ENCODE measurements at regions of chr22 and their contacts with region 1.

Region 1: GRCh38 chr22:39532215-39533071 is at the start of gene RPS19BP1:
- DNase-seq: peak; percentile 96 to 100
- ATAC-seq: peak; percentile 86 to 94 (median 87)
- H3K4me3 ChIP-seq: peak within 1 kb of the TSS; percentile 90
- H3K4me3 Mint-ChIP-seq: peak within 1 kb of the TSS; percentile 94
- H3K27ac ChIP-seq: peak within 1 kb of the TSS; percentile 87
- H3K27ac Mint-ChIP-seq: peak within 1 kb of the TSS; percentile 92 to 97
- H3K4me1 ChIP-seq: peaks cover 54% of the 10 kb centered on the region
- H3K4me1 Mint-ChIP-seq: peaks cover 30 to 54% of the 10 kb centered on the region in 2 donors
- H3K27me3 ChIP-seq: no peaks in the 10 kb centered on the region
- H3K27me3 Mint-ChIP-seq: no peaks in the 10 kb centered on the region
- CTCF ChIP-seq: no peak
- total RNA-seq, gene RPS19BP1: 56.7 to 66.5 (median 61.3) TPM

Region 2: DNA sequence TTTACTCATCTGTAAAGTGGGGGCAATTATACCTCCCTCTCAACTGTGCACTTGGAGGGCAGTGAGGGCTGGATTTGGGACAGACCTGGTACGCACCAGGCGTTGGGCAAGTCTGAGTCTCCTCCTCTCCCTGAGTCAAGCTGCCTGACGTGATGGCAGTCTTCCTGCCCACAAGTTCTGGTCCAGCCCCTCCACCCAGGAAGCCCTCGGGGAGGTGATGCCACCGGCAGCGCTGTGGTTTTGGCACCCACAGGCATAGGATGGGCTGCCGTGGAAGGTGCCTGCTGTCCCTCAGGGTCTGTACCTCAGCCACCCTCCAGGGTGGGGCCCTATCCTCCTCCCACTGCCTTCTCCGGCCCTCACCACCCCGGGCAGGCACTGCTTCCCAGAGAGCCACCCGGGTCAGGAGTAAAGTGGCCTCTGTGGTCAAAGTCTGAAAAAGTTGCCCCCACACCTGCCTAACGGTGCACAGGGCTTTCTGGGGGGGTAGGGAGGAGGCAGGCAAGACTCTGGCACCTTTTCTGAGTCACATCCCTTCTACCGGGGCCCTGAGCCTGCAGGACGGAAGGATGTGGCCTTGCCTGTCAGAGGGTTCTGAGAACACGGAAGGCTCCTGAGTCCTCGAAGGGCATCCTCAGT is 441.9 kb before region 1 on chr22:
- intact Hi-C with region 1: loop called (anchors 1 kb)
- DNase-seq: peak; percentile 90 to 94
- ATAC-seq: peak; percentile 67 to 87 (median 77)
- H3K4me3 ChIP-seq: peak overlapping the region; percentile 22
- H3K4me3 Mint-ChIP-seq: peak overlapping the region; percentile 90
- H3K27ac ChIP-seq: peak overlapping the region; percentile 98
- H3K27ac Mint-ChIP-seq: peak overlapping the region; percentile 98 to 99
- H3K4me1 ChIP-seq: peaks cover 97% of the 10 kb centered on the region
- H3K4me1 Mint-ChIP-seq: peaks cover 82 to 90% of the 10 kb centered on the region in 2 donors
- H3K27me3 ChIP-seq: no peaks in the 10 kb centered on the region
- H3K27me3 Mint-ChIP-seq: no peaks in the 10 kb centered on the region
- CTCF ChIP-seq: no peak

Region 3: DNA sequence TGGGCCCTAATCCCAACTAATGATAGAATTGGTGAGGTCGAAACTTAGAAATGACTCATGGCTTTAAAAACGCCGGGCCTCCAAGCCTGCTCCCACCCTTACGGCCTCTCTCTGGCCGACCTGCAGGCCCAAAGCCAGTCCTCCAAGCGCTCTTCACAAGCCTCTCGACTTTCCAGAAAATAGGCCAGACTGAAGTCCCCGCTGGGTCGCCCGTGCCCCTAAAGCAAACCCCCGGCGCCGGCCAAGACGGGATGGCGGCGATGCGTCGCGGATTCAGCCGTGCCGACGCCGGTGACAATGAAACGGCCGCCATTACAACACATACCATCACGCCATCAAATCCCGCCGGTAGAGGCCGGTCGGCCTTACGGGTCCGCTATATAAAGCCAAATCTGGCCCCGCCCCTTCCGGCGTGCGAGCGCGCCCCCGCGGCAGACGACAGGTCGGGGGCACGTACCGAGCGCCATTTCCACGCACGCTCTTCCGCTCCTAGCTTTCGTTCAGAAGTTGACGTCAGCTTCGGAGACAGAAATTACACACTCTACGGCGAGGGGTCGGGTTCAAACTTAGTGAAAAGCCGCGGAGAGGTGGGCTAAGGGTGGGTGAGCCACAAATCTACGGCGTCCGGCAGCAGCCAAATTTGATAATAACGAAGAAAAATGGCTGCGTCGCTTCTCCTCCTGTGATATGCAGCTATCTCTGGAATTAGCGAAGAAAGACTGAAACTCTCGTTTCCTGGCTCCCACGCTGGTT is 213.0 kb before region 1 on chr22 and contains the start of gene RPL3:
- intact Hi-C with region 1: loop called (anchors 2 kb)
- DNase-seq: peak; percentile 98 to 99
- ATAC-seq: peak; percentile 77 to 92 (median 81)
- H3K4me3 ChIP-seq: peak within 1 kb of the TSS; percentile 72
- H3K4me3 Mint-ChIP-seq: peak within 1 kb of the TSS; percentile 99
- H3K27ac ChIP-seq: peak within 1 kb of the TSS; percentile 97
- H3K27ac Mint-ChIP-seq: peak within 1 kb of the TSS; percentile 99 to 100
- H3K4me1 ChIP-seq: peaks cover 54% of the 10 kb centered on the region
- H3K4me1 Mint-ChIP-seq: peaks cover 34 to 63% of the 10 kb centered on the region in 2 donors
- H3K27me3 ChIP-seq: no peaks in the 10 kb centered on the region
- H3K27me3 Mint-ChIP-seq: no peaks in the 10 kb centered on the region
- CTCF ChIP-seq: no peak
- total RNA-seq, gene RPL3: 1,534 to 1,757 (median 1,614) TPM

Region 4: DNA sequence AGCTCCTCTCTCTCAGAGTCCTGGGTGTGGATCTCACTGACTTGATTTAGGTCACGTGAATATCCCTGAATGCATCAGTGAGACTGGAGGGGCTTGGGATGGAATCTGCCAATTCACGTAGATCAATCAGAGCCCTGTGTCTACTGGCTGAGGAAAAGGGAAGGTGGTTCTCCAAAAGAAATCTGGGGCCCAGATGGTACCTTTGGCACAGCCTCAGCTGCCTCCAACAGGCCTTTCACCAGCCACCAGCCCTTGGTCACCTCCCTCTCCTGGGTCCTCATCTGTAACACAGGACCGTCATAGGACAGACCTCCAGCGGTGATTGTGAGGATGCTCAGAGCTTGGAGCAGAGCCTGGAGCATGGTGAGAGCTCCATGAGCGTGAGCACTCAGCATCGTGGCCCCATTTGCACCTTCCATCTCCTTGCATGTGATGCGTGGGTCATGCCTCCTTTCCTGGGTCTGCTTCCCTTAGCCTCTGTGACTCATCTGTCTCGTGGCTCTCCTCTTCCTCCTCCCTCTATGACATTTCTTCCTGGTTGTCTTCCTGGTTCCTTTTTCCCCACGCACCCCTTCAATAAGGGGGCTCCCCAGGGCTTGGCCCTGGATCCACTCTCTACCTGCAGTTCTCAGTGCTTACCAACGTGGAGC is 37.8 kb before region 1 on chr22:
- intact Hi-C with region 1: loop called (anchors 1 kb)
- DNase-seq: no peak
- ATAC-seq: no peak
- H3K4me3 ChIP-seq: no peak overlapping the region
- H3K4me3 Mint-ChIP-seq: no peak overlapping the region
- H3K27ac ChIP-seq: no peak overlapping the region
- H3K27ac Mint-ChIP-seq: no peak overlapping the region
- H3K4me1 ChIP-seq: peaks cover 5% of the 10 kb centered on the region
- H3K4me1 Mint-ChIP-seq: peaks cover 6 to 7% of the 10 kb centered on the region in 2 donors
- H3K27me3 ChIP-seq: no peaks in the 10 kb centered on the region
- H3K27me3 Mint-ChIP-seq: no peaks in the 10 kb centered on the region
- CTCF ChIP-seq: no peak

Region 5: GRCh38 chr22:39520054-39520891 is 12.2 kb before region 1 on chr22 and contains the start of gene ATF4:
- intact Hi-C with region 1: loop called (anchors 1 kb)
- DNase-seq: peak; percentile 92 to 99
- ATAC-seq: peak; percentile 88 to 95 (median 88)
- H3K4me3 ChIP-seq: peak within 1 kb of the TSS; percentile 97
- H3K4me3 Mint-ChIP-seq: peak within 1 kb of the TSS; percentile 98
- H3K27ac ChIP-seq: peak within 1 kb of the TSS; percentile 91
- H3K27ac Mint-ChIP-seq: peak within 1 kb of the TSS; percentile 96 to 98
- H3K4me1 ChIP-seq: peaks cover 45% of the 10 kb centered on the region
- H3K4me1 Mint-ChIP-seq: peaks cover 42% of the 10 kb centered on the region in 2 donors
- H3K27me3 ChIP-seq: no peaks in the 10 kb centered on the region
- H3K27me3 Mint-ChIP-seq: no peaks in the 10 kb centered on the region
- CTCF ChIP-seq: no peak
- total RNA-seq, gene ATF4: 235 to 242 (median 238) TPM

Region 6: DNA sequence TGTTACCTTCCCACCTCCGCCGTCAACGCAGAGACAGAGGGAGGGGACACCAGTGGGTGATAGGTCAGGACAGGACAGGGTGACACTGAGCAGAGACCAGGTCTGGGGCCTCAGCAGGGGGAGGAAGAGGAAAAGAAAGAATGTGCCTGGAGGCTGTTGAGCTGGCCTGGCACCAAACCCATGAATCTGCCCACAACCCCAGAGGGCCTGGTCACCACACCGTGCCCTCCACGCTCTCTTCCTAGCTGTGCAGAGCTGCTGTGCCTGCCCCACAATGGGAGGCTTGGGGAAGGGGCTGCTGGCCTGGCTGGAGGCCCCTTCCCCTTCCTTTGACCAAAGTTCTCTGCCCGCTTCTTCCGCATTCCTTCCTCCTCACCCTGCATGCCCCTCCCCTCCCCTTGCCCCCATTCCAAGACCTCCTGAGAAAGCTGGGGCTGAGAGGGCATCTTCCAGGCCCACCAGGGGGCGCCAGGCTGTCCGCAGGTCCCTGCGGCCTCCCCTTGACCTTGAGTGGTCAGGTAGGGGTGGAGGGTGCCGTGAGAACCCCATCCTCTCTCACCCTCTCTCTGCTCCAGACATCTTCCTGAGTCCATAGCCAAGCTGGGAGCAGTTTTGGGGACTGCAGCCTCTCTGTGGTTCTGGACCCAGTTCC is 27.1 kb after region 1 on chr22:
- intact Hi-C with region 1: no loop called
- DNase-seq: peak in 1 of 2 donors; percentile 14
- ATAC-seq: no peak
- H3K4me3 ChIP-seq: no peak overlapping the region
- H3K4me3 Mint-ChIP-seq: no peak overlapping the region
- H3K27ac ChIP-seq: no peak overlapping the region
- H3K27ac Mint-ChIP-seq: no peak overlapping the region
- H3K4me1 ChIP-seq: peaks cover 6% of the 10 kb centered on the region
- H3K4me1 Mint-ChIP-seq: peaks cover 5 to 7% of the 10 kb centered on the region in 2 donors
- H3K27me3 ChIP-seq: peaks cover 23% of the 10 kb centered on the region
- H3K27me3 Mint-ChIP-seq: peaks cover 19 to 43% of the 10 kb centered on the region in 2 donors
- CTCF ChIP-seq: peak; percentile 16

Region 7: GRCh38 chr22:40044102-40044869 is 511.8 kb after region 1 on chr22:
- intact Hi-C with region 1: loop called (anchors 5 kb)
- DNase-seq: peak; percentile 98 to 99
- ATAC-seq: peak; percentile 82 to 92 (median 85)
- H3K4me3 ChIP-seq: peak overlapping the region; percentile 59
- H3K4me3 Mint-ChIP-seq: peak overlapping the region; percentile 97
- H3K27ac ChIP-seq: peak overlapping the region; percentile 87
- H3K27ac Mint-ChIP-seq: peak overlapping the region; percentile 97 to 99
- H3K4me1 ChIP-seq: peaks cover 21% of the 10 kb centered on the region
- H3K4me1 Mint-ChIP-seq: peaks cover 35 to 36% of the 10 kb centered on the region in 2 donors
- H3K27me3 ChIP-seq: no peaks in the 10 kb centered on the region
- H3K27me3 Mint-ChIP-seq: peaks cover 9 to 13% of the 10 kb centered on the region in 2 donors
- CTCF ChIP-seq: no peak

Region 8: DNA sequence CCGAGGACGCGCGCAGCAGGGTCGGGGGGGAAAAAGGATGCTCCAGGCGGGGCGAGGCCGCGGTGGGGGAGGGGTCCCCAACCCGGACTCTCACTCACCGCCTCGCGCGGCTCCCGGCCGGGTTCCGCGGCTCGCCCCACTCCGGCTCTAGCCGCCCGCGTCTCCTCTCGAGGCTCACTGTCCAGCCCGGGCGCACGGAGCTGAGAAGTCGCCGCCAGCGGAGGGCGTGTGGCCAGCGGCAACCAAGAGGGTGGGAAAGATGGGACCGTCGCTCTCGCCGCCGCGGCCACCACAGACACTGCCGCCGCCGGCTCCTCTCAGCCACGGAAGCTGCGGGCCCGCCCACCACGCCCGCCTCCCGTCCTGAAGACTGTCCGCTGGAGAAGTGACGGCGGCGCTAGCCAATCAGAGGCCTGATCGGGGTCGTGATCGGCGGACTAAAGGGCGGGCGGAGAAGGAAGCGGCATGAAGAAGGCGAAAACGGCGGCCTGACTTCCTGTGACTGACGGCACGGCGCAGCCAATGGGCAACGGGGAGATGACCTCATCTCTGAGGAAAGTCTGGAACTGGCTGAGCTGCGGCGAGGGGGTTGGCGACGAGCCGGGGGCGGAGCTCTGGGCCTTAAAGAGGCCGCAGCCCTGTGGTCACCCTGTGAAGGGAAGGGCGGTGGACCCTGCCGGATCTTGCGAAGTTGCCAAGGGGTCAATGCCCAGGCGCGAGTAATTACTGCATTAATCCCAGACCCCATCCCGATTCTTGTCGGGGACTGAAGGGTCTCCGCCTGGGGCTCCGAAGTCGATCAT is 1104.1 kb after region 1 on chr22 and contains the start of gene MRTFA:
- intact Hi-C with region 1: loop called (anchors 10 kb)
- DNase-seq: peak; percentile 99
- ATAC-seq: peak; percentile 90 to 97 (median 92)
- H3K4me3 ChIP-seq: peak within 1 kb of the TSS; percentile 77
- H3K4me3 Mint-ChIP-seq: peak within 1 kb of the TSS; percentile 95
- H3K27ac ChIP-seq: peak within 1 kb of the TSS; percentile 79
- H3K27ac Mint-ChIP-seq: peak within 1 kb of the TSS; percentile 97
- H3K4me1 ChIP-seq: peaks cover 22% of the 10 kb centered on the region
- H3K4me1 Mint-ChIP-seq: peaks cover 38 to 44% of the 10 kb centered on the region in 2 donors
- H3K27me3 ChIP-seq: no peaks in the 10 kb centered on the region
- H3K27me3 Mint-ChIP-seq: no peaks in the 10 kb centered on the region
- CTCF ChIP-seq: no peak
- total RNA-seq, gene MRTFA: 81.8 to 91.9 (median 83.5) TPM

Measured in natural killer cell (primary cell).